Activated CD8-positive, alpha-beta T cell treated with anti-CD3 and anti-CD28 coated beads, Interleukin-2, amount 10 ng/mL, durations not matched to agents 7 days and 5 days (primary cell): ENCODE measurements at regions of chr1 and their contacts with region 1.

Region 1: GRCh38 chr1:8431019-8431418 is 113.1 kb downstream of the SLC45A1 start:
- DNase-seq: peak; percentile 58
- ATAC-seq: peak; percentile 32
- H3K4me3 Mint-ChIP-seq: peak overlapping the region; percentile 11
- H3K27ac Mint-ChIP-seq: peak overlapping the region; percentile 50
- H3K4me1 Mint-ChIP-seq: peaks cover 61% of the 10 kb centered on the region
- H3K27me3 Mint-ChIP-seq: no peaks in the 10 kb centered on the region

Region 2: GRCh38 chr1:8211589-8212442 is 219.2 kb before region 1 on chr1:
- CTCF ChIA-PET with region 1: no interaction called
- POLR2A ChIA-PET with region 1: no interaction called
- DNase-seq: peak; percentile 24
- ATAC-seq: peak; percentile 33
- H3K4me3 Mint-ChIP-seq: peak overlapping the region; percentile 18
- H3K27ac Mint-ChIP-seq: peak overlapping the region; percentile 30
- H3K4me1 Mint-ChIP-seq: peaks cover 23% of the 10 kb centered on the region
- H3K27me3 Mint-ChIP-seq: peaks cover 28% of the 10 kb centered on the region

Region 3: GRCh38 chr1:8448911-8449661 is 18.1 kb after region 1 on chr1:
- CTCF ChIA-PET with region 1: interaction called, 11 read pairs
- POLR2A ChIA-PET with region 1: interaction called, 3 read pairs
- DNase-seq: no peak
- ATAC-seq: no peak
- H3K4me3 Mint-ChIP-seq: no peak overlapping the region
- H3K27ac Mint-ChIP-seq: no peak overlapping the region
- H3K4me1 Mint-ChIP-seq: peaks cover 30% of the 10 kb centered on the region
- H3K27me3 Mint-ChIP-seq: no peaks in the 10 kb centered on the region

Region 4: GRCh38 chr1:8472668-8473067 is 41.6 kb after region 1 on chr1:
- CTCF ChIA-PET with region 1: interaction called, 12 read pairs
- POLR2A ChIA-PET with region 1: interaction called, 6 read pairs
- DNase-seq: peak; percentile 69
- ATAC-seq: peak; percentile 89
- H3K4me3 Mint-ChIP-seq: no peak overlapping the region
- H3K27ac Mint-ChIP-seq: peak overlapping the region; percentile 37
- H3K4me1 Mint-ChIP-seq: peaks cover 49% of the 10 kb centered on the region
- H3K27me3 Mint-ChIP-seq: no peaks in the 10 kb centered on the region

Region 5: DNA sequence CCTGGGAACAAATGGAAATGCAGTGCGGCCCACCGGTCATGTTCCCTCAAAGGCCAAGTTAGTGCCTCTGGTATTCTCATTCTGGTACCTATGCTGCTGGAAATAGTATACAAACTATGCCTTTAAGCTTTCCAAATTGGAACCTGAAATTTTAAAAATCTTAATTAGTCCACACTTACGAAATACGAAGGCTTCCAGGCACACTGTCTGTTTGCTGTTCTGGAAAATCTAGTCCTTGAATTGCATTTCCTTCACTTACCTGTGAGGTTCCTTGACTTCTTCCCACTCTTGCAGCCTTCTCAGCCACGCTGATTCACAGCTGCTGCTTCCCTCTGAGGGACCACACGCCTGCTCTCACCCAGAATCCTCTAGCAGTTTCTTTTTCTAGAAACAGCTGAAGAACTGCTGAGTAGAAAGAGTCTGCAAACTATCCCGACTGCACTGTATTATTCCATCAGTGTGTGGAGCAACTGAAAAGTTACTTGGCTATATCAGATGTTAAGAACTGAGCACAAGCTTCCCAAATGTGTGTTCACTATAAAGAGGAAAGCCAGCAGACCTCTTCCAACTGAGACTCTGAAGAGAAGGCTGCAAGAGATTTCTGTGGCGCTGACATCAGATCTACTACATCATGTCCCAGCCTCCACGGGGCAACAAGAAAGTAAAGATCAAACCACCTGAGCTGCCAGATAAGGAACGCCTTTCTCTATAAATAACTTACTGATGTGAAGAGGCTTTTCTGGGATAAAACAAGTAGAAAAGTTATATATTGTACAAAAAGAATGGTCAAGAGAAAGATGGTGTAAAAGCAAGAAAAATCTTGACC is 159.7 kb after region 1 on chr1:
- CTCF ChIA-PET with region 1: no interaction called
- POLR2A ChIA-PET with region 1: no interaction called
- DNase-seq: peak; percentile 25
- ATAC-seq: no peak
- H3K4me3 Mint-ChIP-seq: no peak overlapping the region
- H3K27ac Mint-ChIP-seq: peak overlapping the region; percentile 3
- H3K4me1 Mint-ChIP-seq: peaks cover 27% of the 10 kb centered on the region
- H3K27me3 Mint-ChIP-seq: no peaks in the 10 kb centered on the region